T-cell (primary cell): ENCODE measurements at regions of chr20 and their contacts with region 1.

Region 1: DNA sequence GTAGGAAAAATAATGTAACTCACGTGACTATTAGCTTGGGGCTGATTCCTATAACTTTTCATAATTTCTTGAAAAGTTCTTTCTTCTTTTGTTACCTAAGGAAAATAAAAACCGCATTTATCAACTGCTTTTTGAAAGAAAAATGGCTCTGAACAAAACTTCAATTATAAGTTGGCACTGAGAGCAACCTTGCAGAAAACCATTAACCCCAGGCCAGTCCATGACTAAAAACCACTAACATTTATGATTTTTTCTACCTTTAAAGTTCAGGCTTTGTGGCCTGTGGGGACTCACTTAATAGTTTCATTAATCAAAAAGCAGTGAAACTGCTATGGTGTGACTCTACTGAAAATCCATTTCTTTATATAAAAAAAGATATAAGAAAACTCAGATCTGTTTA is 69.1 kb upstream of the SAMHD1 start:
- DNase-seq: no peak
- ATAC-seq: no peak
- H3K4me3 ChIP-seq: no peak overlapping the region
- H3K4me3 Mint-ChIP-seq: no peak overlapping the region
- H3K27ac ChIP-seq: no peak overlapping the region
- H3K27ac Mint-ChIP-seq: no peak overlapping the region
- H3K4me1 ChIP-seq: peaks cover 9 to 16% of the 10 kb centered on the region in 2 experiments
- H3K4me1 Mint-ChIP-seq: peaks cover 31 to 34% (median 33%) of the 10 kb centered on the region in 3 donors
- H3K27me3 ChIP-seq: no peaks in the 10 kb centered on the region
- H3K27me3 Mint-ChIP-seq: no peaks in the 10 kb centered on the region

Region 2: DNA sequence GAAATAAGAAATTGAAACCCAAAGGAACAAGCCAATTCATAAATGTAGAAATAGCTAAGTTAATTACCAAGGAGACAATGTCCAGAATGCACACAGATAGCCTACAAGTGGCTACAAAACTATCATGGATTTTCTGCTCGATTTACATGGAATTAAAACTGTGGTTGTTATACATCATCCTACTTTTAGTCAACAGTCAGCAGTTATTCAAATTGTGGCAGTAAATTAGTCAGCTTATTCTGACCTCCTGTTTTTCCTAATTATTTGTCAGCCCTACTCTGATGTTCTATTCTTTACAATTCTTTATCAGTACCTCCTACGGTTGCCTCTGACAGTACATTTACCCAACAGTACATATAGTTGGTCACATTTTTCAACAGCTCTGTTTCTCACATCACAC is 45.5 kb after region 1 on chr20:
- CTCF ChIA-PET with region 1: no interaction called
- POLR2A ChIA-PET with region 1: interaction called in 1 of 2 experiments, 10 read pairs
- DNase-seq: no peak
- ATAC-seq: no peak
- H3K4me3 ChIP-seq: no peak overlapping the region
- H3K4me3 Mint-ChIP-seq: no peak overlapping the region
- H3K27ac ChIP-seq: no peak overlapping the region
- H3K27ac Mint-ChIP-seq: no peak overlapping the region
- H3K4me1 ChIP-seq: peaks cover 0 to 7% of the 10 kb centered on the region in 2 experiments
- H3K4me1 Mint-ChIP-seq: peaks cover 2 to 4% (median 4%) of the 10 kb centered on the region in 3 donors
- H3K27me3 ChIP-seq: no peaks in the 10 kb centered on the region
- H3K27me3 Mint-ChIP-seq: no peaks in the 10 kb centered on the region

Region 3: GRCh38 chr20:37178839-37179670 is 158.4 kb after region 1 on chr20 and contains the starts of genes MROH8 and RPN2:
- CTCF ChIA-PET with region 1: no interaction called
- POLR2A ChIA-PET with region 1: no interaction called
- DNase-seq: peak; percentile 88 to 98 (median 94)
- ATAC-seq: peak; percentile 96 to 98 (median 96)
- H3K4me3 ChIP-seq: peak within 1 kb of the TSS; percentile 89 to 98
- H3K4me3 Mint-ChIP-seq: peak within 1 kb of the TSS; percentile 96 to 99 (median 98)
- H3K27ac ChIP-seq: peak within 1 kb of the TSS; percentile 89
- H3K27ac Mint-ChIP-seq: peak within 1 kb of the TSS; percentile 98 to 99
- H3K4me1 ChIP-seq: peaks cover 12 to 37% of the 10 kb centered on the region in 2 experiments
- H3K4me1 Mint-ChIP-seq: peaks cover 41 to 44% (median 44%) of the 10 kb centered on the region in 3 donors
- H3K27me3 ChIP-seq: no peaks in the 10 kb centered on the region
- H3K27me3 Mint-ChIP-seq: no peaks in the 10 kb centered on the region
- total RNA-seq, gene MROH8: 0.70 to 2.5 (median 1.5) TPM
- total RNA-seq, gene RPN2: 88.8 to 130 (median 121) TPM